CD4-positive, alpha-beta T cell (primary cell): ENCODE measurements at regions of chr11 and their contacts with region 1.

Region 1: DNA sequence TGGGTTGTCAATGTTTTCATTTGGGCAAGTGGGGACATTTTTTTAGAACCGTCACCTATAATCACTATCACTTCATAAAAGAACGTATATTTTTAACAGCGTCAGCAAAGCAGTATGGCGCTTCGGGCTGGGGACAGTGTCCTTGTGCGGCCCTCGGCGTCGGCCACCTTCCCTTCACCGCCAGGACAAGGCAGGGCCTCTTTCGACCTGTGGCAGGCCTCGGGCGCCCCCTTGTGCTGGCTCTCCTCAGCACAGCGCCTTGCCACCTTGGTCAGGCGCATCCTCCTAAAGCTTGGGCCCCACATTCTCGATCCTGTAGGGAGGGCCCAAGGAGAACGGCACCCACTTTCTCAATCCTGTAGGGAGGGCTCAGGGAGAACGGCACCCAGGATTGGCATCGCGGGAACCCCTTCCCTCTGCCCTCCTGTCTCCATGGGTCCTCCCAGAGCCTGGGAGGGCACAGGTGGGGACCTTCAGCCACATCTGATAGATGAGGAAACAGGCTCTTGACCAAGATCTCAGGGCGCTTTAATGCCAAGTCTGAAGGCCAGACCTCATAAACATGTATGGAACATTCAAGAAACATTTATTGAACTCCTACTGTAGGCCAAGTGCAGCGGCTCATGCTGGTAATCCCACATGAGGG is 11.5 kb upstream of the FADD start:
- DNase-seq: peak; percentile 15 to 69 (median 35)
- ATAC-seq: peak; percentile 55
- H3K4me3 ChIP-seq: no peak overlapping the region
- H3K4me3 Mint-ChIP-seq: no peak overlapping the region
- H3K27ac ChIP-seq: no peak overlapping the region
- H3K27ac Mint-ChIP-seq: no peak overlapping the region
- H3K4me1 ChIP-seq: peaks cover 7% of the 10 kb centered on the region
- H3K4me1 Mint-ChIP-seq: no peaks in the 10 kb centered on the region
- H3K27me3 ChIP-seq: peaks cover 4 to 13% of the 10 kb centered on the region in 2 experiments
- H3K27me3 Mint-ChIP-seq: peaks cover 16% of the 10 kb centered on the region
- CTCF ChIP-seq: peak; percentile 58

Region 2: GRCh38 chr11:69909561-69910496 is 281.8 kb before region 1 on chr11:
- CTCF ChIA-PET with region 1: interaction called, 5 read pairs
- POLR2A ChIA-PET with region 1: no interaction called
- intact Hi-C with region 1: loop called in 1 of 2 experiments (anchors 2 kb)
- DNase-seq: peak in 2 of 14 experiments; percentile 28 to 33
- ATAC-seq: no peak
- H3K4me3 ChIP-seq: no peak overlapping the region
- H3K4me3 Mint-ChIP-seq: no peak overlapping the region
- H3K27ac ChIP-seq: no peak overlapping the region
- H3K27ac Mint-ChIP-seq: no peak overlapping the region
- H3K4me1 ChIP-seq: no peaks in the 10 kb centered on the region
- H3K4me1 Mint-ChIP-seq: no peaks in the 10 kb centered on the region
- H3K27me3 ChIP-seq: peaks cover 17 to 27% of the 10 kb centered on the region in 2 experiments
- H3K27me3 Mint-ChIP-seq: peaks cover 49% of the 10 kb centered on the region
- CTCF ChIP-seq: peak; percentile 46

Region 3: DNA sequence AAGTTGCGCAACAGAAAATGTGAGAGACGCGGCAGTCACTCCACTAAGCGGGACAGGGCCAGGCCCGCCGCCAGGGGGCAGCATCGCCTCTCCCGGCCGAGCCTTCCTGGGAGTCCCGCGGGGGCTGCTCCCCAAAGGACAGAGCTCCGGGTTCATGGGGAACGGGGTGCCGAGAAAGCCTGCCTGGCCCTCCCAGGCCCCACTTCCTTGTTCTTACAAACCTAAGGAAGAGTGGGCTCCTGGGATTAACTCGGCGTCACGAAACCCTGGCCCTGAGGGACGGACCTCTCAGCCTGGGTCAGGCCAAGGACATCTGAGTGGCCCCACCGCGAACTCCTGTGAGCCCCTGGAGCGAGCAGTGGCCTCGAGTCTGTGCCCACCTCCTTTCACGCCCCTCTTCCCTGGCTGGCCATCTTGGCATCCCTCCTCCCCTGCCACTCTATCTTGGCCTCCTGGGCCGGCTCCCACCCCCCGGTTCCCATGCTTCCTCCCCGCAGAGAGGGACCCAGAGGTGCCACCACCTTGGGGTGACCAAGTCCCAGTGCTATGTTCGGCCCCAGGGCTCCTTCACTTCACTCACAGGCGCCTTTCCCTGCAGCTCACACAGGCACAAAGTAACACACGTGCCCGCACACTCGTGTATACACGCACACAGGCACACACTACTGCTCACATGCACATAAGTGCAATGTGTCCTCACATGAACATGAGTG is 272.5 kb before region 1 on chr11:
- CTCF ChIA-PET with region 1: interaction called, 7 read pairs
- POLR2A ChIA-PET with region 1: no interaction called
- intact Hi-C with region 1: loop called (anchors 1 kb)
- DNase-seq: peak; percentile 43 to 77 (median 60)
- ATAC-seq: peak; percentile 58
- H3K4me3 ChIP-seq: no peak overlapping the region
- H3K4me3 Mint-ChIP-seq: no peak overlapping the region
- H3K27ac ChIP-seq: no peak overlapping the region
- H3K27ac Mint-ChIP-seq: no peak overlapping the region
- H3K4me1 ChIP-seq: peaks cover 9% of the 10 kb centered on the region
- H3K4me1 Mint-ChIP-seq: no peaks in the 10 kb centered on the region
- H3K27me3 ChIP-seq: peaks cover 14 to 33% of the 10 kb centered on the region in 2 experiments
- H3K27me3 Mint-ChIP-seq: peaks cover 62% of the 10 kb centered on the region
- CTCF ChIP-seq: peak; percentile 77